ENCODE measurements at regions of chr2 and their contacts with region 1.

Region 1: GRCh38 chr2:130332271-130333073 is 10.2 kb upstream of the IMP4 start:
- DNase-seq: peak; percentile 82
- H3K4me3 ChIP-seq: no peak overlapping the region
- H3K27ac ChIP-seq: peak overlapping the region in 1 of 2 donors; percentile 51
- H3K4me1 ChIP-seq: no peaks in the 10 kb centered on the region
- H3K27me3 ChIP-seq: no peaks in the 10 kb centered on the region
- CTCF ChIP-seq: peak; percentile 82 to 92 (median 88)
- POLR2A ChIP-seq: no peak

Region 2: GRCh38 chr2:129908721-129909373 is 423.6 kb before region 1 on chr2:
- intact Hi-C with region 1: no loop called
- DNase-seq: no peak
- H3K4me3 ChIP-seq: no peak overlapping the region
- H3K27ac ChIP-seq: no peak overlapping the region
- H3K4me1 ChIP-seq: no peaks in the 10 kb centered on the region
- H3K27me3 ChIP-seq: no peaks in the 10 kb centered on the region
- CTCF ChIP-seq: no peak
- POLR2A ChIP-seq: no peak

Region 3: GRCh38 chr2:130181325-130181879 is 151.1 kb before region 1 on chr2 and contains the start of gene SMPD4:
- intact Hi-C with region 1: loop called (anchors 10 kb)
- DNase-seq: peak; percentile 97 to 98
- H3K4me3 ChIP-seq: peak within 1 kb of the TSS; percentile 84 to 100
- H3K27ac ChIP-seq: peak within 1 kb of the TSS; percentile 92 to 95
- H3K4me1 ChIP-seq: peaks cover 0 to 11% of the 10 kb centered on the region in 2 donors
- H3K27me3 ChIP-seq: no peaks in the 10 kb centered on the region
- CTCF ChIP-seq: peak in 1 of 4 experiments; percentile 19
- POLR2A ChIP-seq: no peak
- total RNA-seq, gene SMPD4: 15.0 to 74.9 (median 35.4) TPM

Measured in uterus (tissue), 4 donors.